GM12878 (cell line): ENCODE measurements at regions of chr1 and their contacts with region 1.

Region 1: DNA sequence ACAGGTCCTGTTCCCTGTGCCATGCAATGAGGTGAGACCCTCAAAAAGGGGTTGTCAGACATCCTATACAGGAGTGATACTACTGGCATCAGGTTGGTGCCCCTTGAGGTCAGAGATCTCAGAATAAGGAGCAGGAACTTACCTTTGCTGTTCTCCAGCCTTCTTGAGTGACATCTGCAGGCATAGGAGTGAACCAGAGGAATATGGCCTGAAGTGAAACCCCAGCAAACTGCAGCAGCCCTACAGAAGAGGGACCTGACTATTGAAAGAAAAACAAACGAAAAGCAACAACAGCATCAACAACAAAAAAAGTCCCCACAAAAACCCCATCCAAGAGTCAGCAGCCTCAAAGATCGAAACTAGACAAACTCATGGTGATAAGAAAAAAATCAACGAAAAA is 74.5 kb downstream of the CHD1L start:
- DNase-seq: no peak
- ATAC-seq: peak; percentile 58
- H3K4me3 ChIP-seq: no peak overlapping the region
- H3K27ac ChIP-seq: no peak overlapping the region
- H3K4me1 ChIP-seq: no peaks in the 10 kb centered on the region
- H3K27me3 ChIP-seq: no peaks in the 10 kb centered on the region
- CTCF ChIP-seq: no peak
- EP300 ChIP-seq: no peak
- POLR2A ChIP-seq: no peak
- RAD21 ChIP-seq: no peak

Region 2: DNA sequence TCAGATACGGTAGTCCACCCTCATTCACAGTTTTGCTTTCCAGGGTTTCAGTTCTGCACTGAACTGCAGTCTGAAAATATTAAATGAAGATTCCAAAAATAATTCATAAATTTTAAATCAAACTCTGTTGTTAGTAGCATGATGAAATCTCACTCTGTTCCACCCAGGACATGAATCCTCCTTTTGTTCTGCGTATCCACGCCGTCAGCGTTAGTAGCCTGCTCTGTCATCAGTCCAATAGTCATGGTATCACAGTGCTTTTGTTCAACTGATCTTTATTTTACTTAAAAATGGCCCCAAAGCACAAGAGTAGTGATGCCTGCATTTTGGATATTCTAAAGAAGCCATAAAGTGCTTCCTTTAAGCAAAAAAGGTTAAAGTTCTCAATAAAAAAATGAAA is 50.6 kb before region 1 on chr1:
- CTCF ChIA-PET with region 1: no interaction called
- POLR2A ChIA-PET with region 1: no interaction called
- RAD21 ChIA-PET with region 1: no interaction called
- SMC1A ChIA-PET with region 1: no interaction called
- in situ Hi-C with region 1: loop called (anchors 5 kb)
- intact Hi-C with region 1: no loop called
- DNase-seq: no peak
- ATAC-seq: no peak
- H3K4me3 ChIP-seq: no peak overlapping the region
- H3K27ac ChIP-seq: no peak overlapping the region
- H3K4me1 ChIP-seq: no peaks in the 10 kb centered on the region
- H3K27me3 ChIP-seq: no peaks in the 10 kb centered on the region
- CTCF ChIP-seq: no peak
- EP300 ChIP-seq: no peak
- POLR2A ChIP-seq: no peak
- RAD21 ChIP-seq: no peak

Region 3: GRCh38 chr1:147336290-147336689 is 19.3 kb after region 1 on chr1:
- CTCF ChIA-PET with region 1: no interaction called
- POLR2A ChIA-PET with region 1: no interaction called
- RAD21 ChIA-PET with region 1: no interaction called
- SMC1A ChIA-PET with region 1: no interaction called
- in situ Hi-C with region 1: no loop called
- intact Hi-C with region 1: no loop called
- DNase-seq: no peak
- ATAC-seq: no peak
- H3K4me3 ChIP-seq: no peak overlapping the region
- H3K27ac ChIP-seq: no peak overlapping the region
- H3K4me1 ChIP-seq: no peaks in the 10 kb centered on the region
- H3K27me3 ChIP-seq: no peaks in the 10 kb centered on the region
- CTCF ChIP-seq: no peak
- EP300 ChIP-seq: no peak
- POLR2A ChIP-seq: no peak
- RAD21 ChIP-seq: no peak

Region 4: DNA sequence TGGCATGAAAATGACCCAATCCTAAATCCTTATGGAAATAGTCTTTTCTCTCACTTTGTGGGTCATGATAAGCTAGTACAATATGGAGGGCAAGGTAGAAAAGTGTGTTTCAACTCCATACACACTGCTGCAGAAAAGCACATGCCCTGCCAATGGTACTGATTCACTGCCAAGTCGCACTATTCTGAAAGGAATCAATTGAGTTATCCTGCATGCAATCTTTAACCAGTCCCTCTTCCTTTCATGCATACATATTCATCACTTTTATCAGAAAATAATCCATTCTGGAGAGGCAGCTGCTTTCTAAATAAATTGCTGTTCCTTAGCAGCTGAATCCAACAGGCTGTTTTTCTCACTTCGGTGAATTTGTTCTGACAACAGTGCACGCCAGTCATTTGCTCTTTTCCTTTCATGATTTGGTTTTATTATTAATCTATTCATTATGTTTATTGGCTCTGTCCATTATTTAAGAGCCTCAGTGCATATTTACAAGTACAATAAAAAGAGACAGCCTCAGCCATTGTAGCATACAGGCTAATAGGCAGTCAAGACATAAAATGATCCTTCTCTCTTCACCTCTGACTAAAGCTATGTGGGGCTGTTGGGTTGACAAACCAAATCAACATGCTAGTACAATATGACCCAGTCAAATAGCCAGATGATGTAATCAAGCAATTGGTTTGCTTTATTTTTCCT is 34.3 kb after region 1 on chr1:
- CTCF ChIA-PET with region 1: no interaction called
- POLR2A ChIA-PET with region 1: no interaction called
- RAD21 ChIA-PET with region 1: no interaction called
- SMC1A ChIA-PET with region 1: no interaction called
- in situ Hi-C with region 1: loop called (anchors 5 kb)
- intact Hi-C with region 1: no loop called
- DNase-seq: no peak
- ATAC-seq: no peak
- H3K4me3 ChIP-seq: no peak overlapping the region
- H3K27ac ChIP-seq: no peak overlapping the region
- H3K4me1 ChIP-seq: no peaks in the 10 kb centered on the region
- H3K27me3 ChIP-seq: no peaks in the 10 kb centered on the region
- CTCF ChIP-seq: no peak
- EP300 ChIP-seq: no peak
- POLR2A ChIP-seq: no peak
- RAD21 ChIP-seq: no peak